ENCODE measurements at regions of chr3 and their contacts with region 1.

Region 1: DNA sequence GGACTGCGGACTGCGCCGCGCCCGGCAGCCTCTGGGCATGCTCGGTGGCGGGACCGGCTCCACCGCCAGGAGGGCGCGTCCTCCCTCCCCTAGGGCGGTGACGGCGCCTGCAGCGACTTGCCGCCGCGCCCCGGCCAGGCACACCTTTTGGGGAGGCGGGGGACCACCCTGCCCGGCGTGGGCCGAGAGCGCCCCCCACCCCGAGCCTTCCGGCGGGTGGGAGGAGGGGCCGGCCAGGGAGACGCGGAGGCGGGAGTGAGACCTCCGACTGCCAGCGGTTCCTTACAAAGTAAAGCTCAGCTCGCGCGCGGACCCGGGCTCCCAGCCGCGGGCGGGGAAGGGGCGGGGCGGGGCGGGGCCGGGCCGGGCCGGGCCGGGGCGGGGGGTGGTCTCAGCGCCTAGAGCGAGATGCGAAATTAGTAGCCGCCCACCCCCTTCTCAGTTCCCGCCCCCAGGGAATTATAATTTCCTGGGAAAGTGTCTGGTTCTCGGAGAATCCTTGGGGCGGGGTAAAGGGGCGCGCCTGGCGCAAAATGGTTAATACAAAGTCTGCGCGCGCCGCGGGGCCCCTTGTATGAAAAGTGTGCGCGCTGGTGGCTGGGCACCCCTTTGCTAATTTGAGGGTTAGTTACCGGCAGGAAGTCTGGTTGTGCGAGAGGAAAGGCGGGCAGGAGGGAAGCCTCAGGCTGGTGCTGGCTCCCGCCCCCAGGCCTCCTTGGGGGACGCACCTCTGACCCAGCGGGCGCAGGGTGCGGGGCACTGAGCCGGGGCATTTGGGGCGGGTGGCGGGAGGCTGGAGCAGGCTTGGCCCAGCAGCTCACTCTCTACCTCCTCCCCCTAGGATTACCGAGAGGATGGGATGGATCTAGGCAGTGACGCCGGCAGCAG is 224.8 kb upstream of the IL12A start:
- DNase-seq: peak; percentile 85
- H3K4me3 ChIP-seq: peak overlapping the region; percentile 22 to 80 (median 64)
- H3K27ac ChIP-seq: peak overlapping the region; percentile 88
- H3K4me1 ChIP-seq: peaks cover 36% of the 10 kb centered on the region
- H3K27me3 ChIP-seq: no peaks in the 10 kb centered on the region
- CTCF ChIP-seq: peak in 1 of 2 donors; percentile 20
- POLR2A ChIP-seq: peak; percentile 12

Region 2: GRCh38 chr3:159593927-159594605 is 169.8 kb before region 1 on chr3:
- CTCF ChIA-PET with region 1: no interaction called
- POLR2A ChIA-PET with region 1: interaction called, 4 read pairs
- dilution Hi-C with region 1: no loop called
- intact Hi-C with region 1: loop called (anchors 1 kb)
- DNase-seq: peak; percentile 89
- H3K4me3 ChIP-seq: no peak overlapping the region
- H3K27ac ChIP-seq: peak overlapping the region; percentile 57
- H3K4me1 ChIP-seq: peaks cover 19% of the 10 kb centered on the region
- H3K27me3 ChIP-seq: peaks cover 3 to 4% of the 10 kb centered on the region in 2 experiments
- CTCF ChIP-seq: no peak
- POLR2A ChIP-seq: no peak

Region 3: GRCh38 chr3:159732172-159733111 is 31.4 kb before region 1 on chr3:
- CTCF ChIA-PET with region 1: interaction called, 3 read pairs
- POLR2A ChIA-PET with region 1: interaction called, 4 read pairs
- dilution Hi-C with region 1: no loop called
- intact Hi-C with region 1: loop called (anchors 1 kb)
- DNase-seq: peak; percentile 53
- H3K4me3 ChIP-seq: no peak overlapping the region
- H3K27ac ChIP-seq: no peak overlapping the region
- H3K4me1 ChIP-seq: peaks cover 28% of the 10 kb centered on the region
- H3K27me3 ChIP-seq: no peaks in the 10 kb centered on the region
- CTCF ChIP-seq: no peak
- POLR2A ChIP-seq: no peak

Region 4: GRCh38 chr3:159804726-159805410 is 41.0 kb after region 1 on chr3:
- CTCF ChIA-PET with region 1: interaction called, 124 read pairs
- POLR2A ChIA-PET with region 1: interaction called, 7 read pairs
- dilution Hi-C with region 1: no loop called
- intact Hi-C with region 1: loop called (anchors 1 kb)
- DNase-seq: peak; percentile 85
- H3K4me3 ChIP-seq: no peak overlapping the region
- H3K27ac ChIP-seq: peak overlapping the region; percentile 19
- H3K4me1 ChIP-seq: peaks cover 18% of the 10 kb centered on the region
- H3K27me3 ChIP-seq: no peaks in the 10 kb centered on the region
- CTCF ChIP-seq: peak; percentile 92 to 96
- POLR2A ChIP-seq: no peak

Region 5: DNA sequence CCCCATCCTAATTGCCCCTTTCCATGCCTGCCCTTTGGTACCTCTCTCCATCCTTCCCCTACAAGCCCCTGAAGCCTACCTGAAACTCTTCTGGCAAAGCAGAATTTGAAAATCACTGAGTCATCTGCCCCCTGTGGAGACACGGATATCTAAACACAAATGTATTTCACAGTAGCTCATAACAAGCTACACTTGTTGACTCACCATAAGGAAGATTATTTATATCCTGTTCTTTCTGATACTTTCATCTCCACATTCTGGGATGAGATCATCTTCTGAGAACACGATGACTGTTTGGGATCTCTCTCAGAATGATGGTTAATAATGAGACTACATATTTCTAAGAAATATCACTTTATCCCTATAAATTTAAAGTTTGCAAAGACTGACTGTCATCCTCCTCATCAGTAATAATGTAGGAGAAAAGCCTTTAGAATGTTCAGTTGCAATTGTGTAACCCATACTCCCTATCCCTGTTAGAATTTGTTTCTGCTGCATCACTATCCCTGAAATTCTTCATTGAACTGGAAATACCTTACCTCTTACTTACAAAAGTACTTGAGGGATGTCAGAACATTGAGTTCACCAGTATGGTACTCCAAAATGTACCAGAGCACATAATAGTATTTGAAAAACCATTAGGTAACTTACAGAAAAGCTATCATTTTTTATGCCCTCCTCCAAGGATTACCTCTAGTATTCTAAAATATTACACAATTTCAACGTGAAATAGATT is 108.7 kb after region 1 on chr3:
- CTCF ChIA-PET with region 1: no interaction called
- POLR2A ChIA-PET with region 1: no interaction called
- dilution Hi-C with region 1: no loop called
- intact Hi-C with region 1: no loop called
- DNase-seq: peak; percentile 85
- H3K4me3 ChIP-seq: no peak overlapping the region
- H3K27ac ChIP-seq: peak overlapping the region; percentile 92
- H3K4me1 ChIP-seq: peaks cover 19% of the 10 kb centered on the region
- H3K27me3 ChIP-seq: no peaks in the 10 kb centered on the region
- CTCF ChIP-seq: peak; percentile 12 to 25
- POLR2A ChIP-seq: no peak

Region 6: DNA sequence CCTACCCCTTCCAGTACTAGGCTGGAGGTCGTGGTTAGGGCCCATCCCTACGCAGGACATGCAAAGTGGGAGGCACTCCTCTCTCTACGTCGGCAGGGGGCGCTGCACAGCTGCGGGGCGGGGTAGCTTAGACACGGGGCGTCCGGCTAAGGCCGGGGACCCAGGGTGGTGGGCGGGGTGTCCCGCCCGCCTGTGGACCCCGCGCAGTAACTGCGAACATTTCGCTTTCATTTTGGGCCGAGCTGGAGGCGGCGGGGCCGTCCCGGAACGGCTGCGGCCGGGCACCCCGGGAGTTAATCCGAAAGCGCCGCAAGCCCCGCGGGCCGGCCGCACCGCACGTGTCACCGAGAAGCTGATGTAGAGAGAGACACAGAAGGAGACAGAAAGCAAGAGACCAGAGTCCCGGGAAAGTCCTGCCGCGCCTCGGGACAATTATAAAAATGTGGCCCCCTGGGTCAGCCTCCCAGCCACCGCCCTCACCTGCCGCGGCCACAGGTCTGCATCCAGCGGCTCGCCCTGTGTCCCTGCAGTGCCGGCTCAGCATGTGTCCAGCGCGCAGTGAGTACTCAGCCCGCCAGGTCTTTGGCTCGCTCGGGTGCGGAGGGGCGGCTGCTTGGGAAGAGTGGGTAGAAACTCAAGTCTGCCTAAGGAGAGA is 224.9 kb after region 1 on chr3 and contains the start of gene IL12A:
- CTCF ChIA-PET with region 1: no interaction called
- POLR2A ChIA-PET with region 1: no interaction called
- dilution Hi-C with region 1: no loop called
- intact Hi-C with region 1: loop called (anchors 1 kb)
- DNase-seq: peak; percentile 75
- H3K4me3 ChIP-seq: peak within 1 kb of the TSS; percentile 58 to 71 (median 60)
- H3K27ac ChIP-seq: no peak within 1 kb of the TSS
- H3K4me1 ChIP-seq: peaks cover 4% of the 10 kb centered on the region
- H3K27me3 ChIP-seq: no peaks in the 10 kb centered on the region
- CTCF ChIP-seq: peak; percentile 96 to 98
- POLR2A ChIP-seq: no peak
- total RNA-seq, gene IL12A: 1.5 and 1.7 TPM in 2 replicates